Activated naive CD4-positive, alpha-beta T cell treated with anti-CD3 and anti-CD28 coated beads for 36 hours (primary cell): ENCODE measurements at regions of chr17 and their contacts with region 1.

Region 1: DNA sequence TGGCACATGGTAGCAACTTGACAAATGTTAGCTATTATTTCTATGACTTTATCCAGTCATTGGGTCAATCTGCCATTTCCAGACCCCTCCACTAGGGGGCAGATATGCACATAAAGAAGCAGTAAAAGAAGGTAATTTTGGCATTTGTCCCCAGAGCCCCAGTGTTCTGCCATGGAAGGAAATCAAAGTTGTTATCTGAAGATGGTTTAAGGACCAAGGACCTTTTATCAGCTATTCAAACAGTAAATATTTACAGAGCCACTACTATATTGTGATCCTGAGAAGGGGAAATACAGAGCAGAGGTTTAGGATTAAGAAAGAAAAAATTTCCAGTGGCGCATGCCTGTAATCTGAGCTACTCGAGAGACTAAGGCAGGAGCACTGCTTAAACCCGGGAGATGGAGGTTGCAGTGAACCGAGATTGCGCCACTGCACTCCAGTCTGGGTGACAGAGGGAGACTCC is 20.0 kb downstream of the TRAF4 start:
- DNase-seq: peak; percentile 93
- H3K4me3 Mint-ChIP-seq: no peak overlapping the region
- H3K27ac Mint-ChIP-seq: no peak overlapping the region
- H3K4me1 Mint-ChIP-seq: peaks cover 12% of the 10 kb centered on the region
- H3K27me3 Mint-ChIP-seq: no peaks in the 10 kb centered on the region

Region 2: DNA sequence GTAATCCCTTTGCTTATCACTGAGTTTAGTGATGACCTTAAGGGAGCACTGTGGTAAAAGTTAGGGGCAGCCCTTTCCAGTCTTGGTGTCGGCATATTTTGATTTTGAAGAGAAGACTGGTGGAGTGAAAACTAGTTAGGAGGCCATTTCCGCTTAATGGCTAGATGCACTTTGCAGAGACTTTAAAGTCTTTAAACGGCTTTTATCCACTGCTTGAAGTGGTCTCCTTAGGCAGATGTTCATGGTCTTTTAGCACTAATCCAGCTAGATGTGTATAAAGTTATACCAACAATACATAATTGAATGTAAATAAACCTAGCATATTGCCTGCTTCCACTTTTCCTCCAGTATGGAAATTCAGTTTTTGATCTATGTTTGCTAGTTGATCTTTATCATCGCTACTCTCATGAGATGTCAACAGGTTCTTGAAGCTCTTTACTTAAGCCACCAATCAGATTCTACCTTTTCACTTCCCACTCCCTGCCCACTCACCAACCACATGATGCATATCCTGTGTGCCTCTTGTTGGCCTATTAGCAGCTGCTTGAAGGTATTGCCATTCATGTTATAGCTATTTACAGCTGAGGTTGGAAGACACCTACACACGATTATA is 589.4 kb before region 1 on chr17:
- CTCF ChIA-PET with region 1: no interaction called
- intact Hi-C with region 1: no loop called
- DNase-seq: peak; percentile 64
- H3K4me3 Mint-ChIP-seq: no peak overlapping the region
- H3K27ac Mint-ChIP-seq: no peak overlapping the region
- H3K4me1 Mint-ChIP-seq: peaks cover 19% of the 10 kb centered on the region
- H3K27me3 Mint-ChIP-seq: no peaks in the 10 kb centered on the region

Region 3: DNA sequence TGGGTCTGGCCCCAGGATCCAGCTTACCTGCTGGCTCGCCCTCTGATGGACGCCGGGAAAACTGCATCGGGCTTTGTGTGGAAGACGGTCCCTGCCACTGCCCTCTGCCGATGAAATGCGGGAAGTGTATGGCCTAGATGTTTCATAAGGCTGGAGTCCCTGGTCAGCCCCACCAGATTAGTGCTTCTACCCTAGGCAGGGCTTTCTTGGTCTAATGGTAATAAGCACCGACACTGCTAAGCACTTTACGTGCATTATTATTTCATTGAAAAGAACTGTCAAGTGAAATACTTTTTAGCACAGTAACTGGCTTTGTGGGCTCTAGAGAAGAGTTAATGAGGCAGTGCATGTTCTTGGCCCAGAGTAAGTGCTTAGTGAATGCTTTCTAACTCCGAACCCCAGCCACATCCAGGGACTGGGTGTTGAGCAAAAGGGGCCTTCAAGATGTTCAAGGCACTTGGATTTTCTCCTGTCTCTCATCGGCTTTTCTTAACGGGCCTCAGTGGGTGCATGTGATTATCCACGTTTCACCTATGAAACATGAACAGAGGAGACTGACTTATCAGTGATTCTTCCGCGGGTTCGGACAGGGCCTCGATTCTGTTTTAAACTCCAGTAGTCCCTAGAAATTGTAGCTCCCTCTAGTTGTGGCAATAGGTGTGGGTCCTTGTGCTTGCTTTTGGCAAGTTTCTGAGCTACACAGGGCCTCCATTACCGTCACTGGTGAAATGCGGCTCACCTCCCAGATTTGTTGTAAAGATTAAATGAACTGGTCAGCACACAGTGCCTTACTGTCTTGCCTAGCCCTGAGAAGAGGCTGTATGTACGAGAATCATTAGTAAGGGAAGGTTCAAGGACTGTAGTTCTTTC is 13.4 kb before region 1 on chr17:
- CTCF ChIA-PET with region 1: interaction called, 80 read pairs
- intact Hi-C with region 1: no loop called
- DNase-seq: peak; percentile 96
- H3K4me3 Mint-ChIP-seq: peak overlapping the region; percentile 6
- H3K27ac Mint-ChIP-seq: peak overlapping the region; percentile 71
- H3K4me1 Mint-ChIP-seq: peaks cover 38% of the 10 kb centered on the region
- H3K27me3 Mint-ChIP-seq: no peaks in the 10 kb centered on the region

Region 4: GRCh38 chr17:28812091-28812747 is 48.4 kb after region 1 on chr17:
- CTCF ChIA-PET with region 1: interaction called, 31 read pairs
- intact Hi-C with region 1: loop called (anchors 1 kb)
- DNase-seq: peak; percentile 98
- H3K4me3 Mint-ChIP-seq: peak overlapping the region; percentile 82
- H3K27ac Mint-ChIP-seq: peak overlapping the region; percentile 86
- H3K4me1 Mint-ChIP-seq: peaks cover 50% of the 10 kb centered on the region
- H3K27me3 Mint-ChIP-seq: no peaks in the 10 kb centered on the region

Region 5: DNA sequence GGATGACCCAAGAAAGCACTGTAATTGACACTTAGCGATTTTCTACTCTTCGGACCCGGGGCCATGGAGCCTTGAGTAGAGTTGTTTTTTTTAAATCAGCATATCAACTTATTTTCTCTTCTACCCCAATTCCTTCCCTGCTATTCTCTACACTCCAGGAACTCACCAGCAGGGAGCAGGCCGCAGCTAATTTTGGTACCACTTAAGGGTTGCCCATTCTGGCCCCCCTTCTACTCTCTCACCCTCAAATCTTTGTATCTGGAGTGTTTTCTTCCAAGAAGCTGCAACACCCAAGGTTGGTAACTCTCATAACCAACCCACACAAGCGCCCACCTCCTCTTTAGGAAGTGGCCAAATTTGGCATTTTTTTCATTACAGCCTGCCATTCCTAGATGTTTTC is 85.4 kb after region 1 on chr17:
- CTCF ChIA-PET with region 1: interaction called, 17 read pairs
- intact Hi-C with region 1: no loop called
- DNase-seq: peak; percentile 60
- H3K4me3 Mint-ChIP-seq: no peak overlapping the region
- H3K27ac Mint-ChIP-seq: no peak overlapping the region
- H3K4me1 Mint-ChIP-seq: no peaks in the 10 kb centered on the region
- H3K27me3 Mint-ChIP-seq: no peaks in the 10 kb centered on the region

Region 6: DNA sequence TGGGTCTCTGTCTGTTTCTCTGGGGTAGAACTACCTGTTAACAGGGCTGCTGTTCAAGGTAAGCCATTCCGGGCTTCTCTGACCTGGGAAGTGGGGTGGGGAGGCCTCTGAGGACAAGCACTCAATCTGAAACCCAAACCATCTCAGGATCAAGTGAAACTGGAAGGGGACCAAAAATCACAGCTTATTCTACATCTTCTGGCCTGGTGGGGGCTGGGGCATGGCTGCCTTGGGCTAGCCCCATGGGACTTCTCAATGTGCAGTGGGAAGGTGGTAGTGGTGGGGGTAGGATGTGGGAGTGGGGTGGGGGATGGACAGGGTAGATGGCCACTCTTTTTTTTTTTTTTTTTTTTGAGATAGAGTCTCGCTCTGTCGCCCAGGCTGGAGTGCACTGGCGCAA is 128.2 kb after region 1 on chr17:
- CTCF ChIA-PET with region 1: interaction called, 19 read pairs
- intact Hi-C with region 1: no loop called
- DNase-seq: no peak
- H3K4me3 Mint-ChIP-seq: no peak overlapping the region
- H3K27ac Mint-ChIP-seq: peak overlapping the region; percentile 77
- H3K4me1 Mint-ChIP-seq: peaks cover 62% of the 10 kb centered on the region
- H3K27me3 Mint-ChIP-seq: no peaks in the 10 kb centered on the region

Region 7: DNA sequence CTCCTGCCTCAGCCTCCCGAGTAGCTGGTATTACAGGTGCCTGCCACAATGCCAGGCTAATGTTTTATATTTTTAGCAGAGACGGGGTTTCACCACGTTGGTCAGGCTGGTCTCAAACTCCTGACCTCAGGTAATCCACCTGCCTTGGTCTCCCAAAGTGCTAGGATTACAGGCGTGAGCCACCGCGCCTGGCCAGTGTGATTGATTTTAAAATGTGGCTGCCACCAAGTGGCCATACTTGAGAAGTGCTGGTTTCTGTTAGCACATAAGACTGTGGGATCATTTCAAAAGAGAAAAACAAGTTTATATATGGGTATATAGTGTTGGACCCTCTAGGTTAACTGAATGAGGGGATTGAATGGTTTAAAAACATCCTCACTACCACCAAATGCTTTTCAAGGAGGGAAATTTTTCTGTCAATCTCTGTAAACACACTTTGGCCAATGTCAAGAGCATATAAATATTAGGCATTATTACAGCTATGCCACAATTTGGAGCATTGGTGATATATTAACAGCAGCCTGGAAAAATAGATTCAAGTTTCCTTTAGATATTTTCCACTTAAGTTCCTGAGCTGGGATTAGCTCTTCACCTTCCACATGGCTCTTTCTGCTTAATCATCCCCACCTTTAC is 152.6 kb after region 1 on chr17:
- CTCF ChIA-PET with region 1: interaction called, 12 read pairs
- intact Hi-C with region 1: loop called (anchors 1 kb)
- DNase-seq: peak; percentile 62
- H3K4me3 Mint-ChIP-seq: no peak overlapping the region
- H3K27ac Mint-ChIP-seq: peak overlapping the region; percentile 34
- H3K4me1 Mint-ChIP-seq: peaks cover 13% of the 10 kb centered on the region
- H3K27me3 Mint-ChIP-seq: no peaks in the 10 kb centered on the region